Activated T-helper 2 cell treated with anti-CD3 and anti-CD28 coated beads, Interferon-gamma antibody, Interleukin-2, Interleukin-4, amounts not matched to agents 10 μg/mL and 5 μg/mL and 100 μg/mL, durations not matched to agents 14 hours and 24 hours and 36 hours (primary cell): ENCODE measurements at regions of chr1 and their contacts with region 1.

Region 1: GRCh38 chr1:100443811-100444571 is 91.7 kb downstream of the CDC14A start:
- DNase-seq: peak; percentile 21
- H3K4me3 Mint-ChIP-seq: peak overlapping the region; percentile 68
- H3K27ac Mint-ChIP-seq: peak overlapping the region; percentile 92
- H3K4me1 Mint-ChIP-seq: peaks cover 75% of the 10 kb centered on the region
- H3K27me3 Mint-ChIP-seq: no peaks in the 10 kb centered on the region

Region 2: GRCh38 chr1:100351095-100351891 is 92.7 kb before region 1 on chr1:
- intact Hi-C with region 1: loop called (anchors 1 kb)
- DNase-seq: peak; percentile 84
- H3K4me3 Mint-ChIP-seq: peak overlapping the region; percentile 87
- H3K27ac Mint-ChIP-seq: peak overlapping the region; percentile 89
- H3K4me1 Mint-ChIP-seq: peaks cover 35% of the 10 kb centered on the region
- H3K27me3 Mint-ChIP-seq: peaks cover 4% of the 10 kb centered on the region

Region 3: DNA sequence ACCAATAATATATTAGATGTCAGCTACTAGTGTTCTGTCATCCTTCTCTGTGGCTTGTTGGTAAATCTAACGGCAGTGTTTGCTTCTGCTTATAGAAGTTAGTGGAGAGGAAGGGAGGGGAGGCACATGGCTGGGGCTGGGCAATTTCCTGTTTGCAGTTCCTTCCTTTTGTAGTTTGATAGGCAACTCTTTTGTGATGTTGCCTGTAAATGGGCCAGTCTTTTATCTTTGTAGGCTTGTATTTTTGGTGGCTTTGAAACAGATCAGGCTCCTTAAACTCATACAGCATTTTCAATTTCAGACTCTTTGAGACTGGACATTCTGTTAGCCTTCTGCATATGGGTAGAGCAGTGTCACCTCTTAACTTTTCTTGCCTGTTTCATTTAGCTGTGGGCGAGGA is 43.6 kb before region 1 on chr1:
- intact Hi-C with region 1: loop called (anchors 2 kb)
- DNase-seq: peak; percentile 56
- H3K4me3 Mint-ChIP-seq: peak overlapping the region; percentile 48
- H3K27ac Mint-ChIP-seq: peak overlapping the region; percentile 90
- H3K4me1 Mint-ChIP-seq: peaks cover 68% of the 10 kb centered on the region
- H3K27me3 Mint-ChIP-seq: no peaks in the 10 kb centered on the region

Region 4: DNA sequence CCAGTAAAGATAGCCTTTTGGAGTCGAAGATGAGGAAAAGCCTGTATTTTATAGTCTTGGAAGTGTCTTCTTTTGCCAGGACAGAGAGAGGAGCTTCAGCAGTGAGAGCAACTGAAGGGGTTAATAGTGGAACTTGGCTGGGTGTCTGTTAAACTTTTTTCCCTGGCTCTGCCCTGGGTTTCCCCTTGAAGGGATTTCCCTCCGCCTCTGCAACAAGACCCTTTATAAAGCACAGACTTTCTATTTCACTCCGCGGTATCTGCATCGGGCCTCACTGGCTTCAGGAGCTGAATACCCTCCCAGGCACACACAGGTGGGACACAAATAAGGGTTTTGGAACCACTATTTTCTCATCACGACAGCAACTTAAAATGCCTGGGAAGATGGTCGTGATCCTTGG is 275.5 kb after region 1 on chr1 and contains the start of gene VCAM1:
- intact Hi-C with region 1: loop called (anchors 10 kb)
- DNase-seq: no peak
- H3K4me3 Mint-ChIP-seq: no peak within 1 kb of the TSS
- H3K27ac Mint-ChIP-seq: no peak within 1 kb of the TSS
- H3K4me1 Mint-ChIP-seq: peaks cover 4% of the 10 kb centered on the region
- H3K27me3 Mint-ChIP-seq: peaks cover 17% of the 10 kb centered on the region
- total RNA-seq, gene VCAM1: 0.05 TPM in 1 of 2 replicates, not detected in the other